SK-N-SH (cell line): ENCODE measurements at regions of chr1 and their contacts with region 1.

Region 1: GRCh38 chr1:23184212-23184934 is 15.7 kb upstream of the LUZP1 start:
- DNase-seq: peak; percentile 64
- H3K4me3 ChIP-seq: peak overlapping the region; percentile 15 to 51; a peak in 3 of 4 replicates
- H3K27ac ChIP-seq: no peak overlapping the region
- H3K4me1 ChIP-seq: peaks cover 0 to 7% of the 10 kb centered on the region in 2 experiments; a peak in 3 of 4 replicates
- H3K27me3 ChIP-seq: no peaks in the 10 kb centered on the region
- CTCF ChIP-seq: peak; percentile 90
- EP300 ChIP-seq: no peak
- RAD21 ChIP-seq: peak; percentile 89

Region 2: DNA sequence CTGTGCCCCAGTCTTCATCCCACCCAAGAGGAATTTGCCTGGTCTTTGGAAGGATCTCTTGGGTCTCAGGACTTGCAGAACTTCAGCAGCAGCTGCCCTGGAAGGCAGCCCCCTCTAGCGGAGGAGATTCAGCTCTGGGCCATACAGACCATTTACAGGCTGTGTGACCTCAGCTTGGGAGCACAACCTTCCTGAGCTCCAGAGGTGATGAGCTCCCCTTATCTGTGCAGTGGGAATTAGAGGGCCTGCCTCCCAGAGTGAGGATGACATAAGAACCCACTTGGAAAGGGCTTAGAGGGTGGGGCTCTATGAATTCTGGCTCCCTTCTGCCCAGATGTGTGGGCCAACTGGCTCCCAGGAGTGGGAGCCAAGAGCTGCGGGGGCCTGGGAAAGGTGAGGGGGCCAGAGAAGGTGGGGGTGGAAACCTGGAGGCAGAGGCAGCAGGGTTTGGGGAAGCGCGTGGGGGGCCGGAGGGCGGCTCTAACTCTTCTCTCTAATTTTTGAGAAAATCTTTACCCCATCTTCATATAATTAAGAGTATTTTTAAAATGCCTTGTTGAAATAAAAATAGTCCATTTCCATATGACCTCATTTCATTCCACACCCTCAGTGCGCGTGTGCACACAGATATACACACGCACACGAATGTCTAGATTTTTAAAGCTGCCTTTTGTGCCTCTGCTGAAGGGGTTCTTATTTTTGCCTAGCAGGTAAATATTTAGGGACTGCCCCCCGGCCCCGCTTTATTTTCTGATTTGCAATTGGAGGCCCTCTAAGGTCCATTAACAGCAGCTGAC is 452.3 kb before region 1 on chr1:
- CTCF ChIA-PET with region 1: no interaction called
- POLR2A ChIA-PET with region 1: no interaction called
- DNase-seq: no peak
- H3K4me3 ChIP-seq: no peak overlapping the region; a peak in 1 of 4 replicates
- H3K27ac ChIP-seq: no peak overlapping the region
- H3K4me1 ChIP-seq: peaks cover 0 to 4% of the 10 kb centered on the region in 2 experiments; a peak in 1 of 4 replicates
- H3K27me3 ChIP-seq: no peaks in the 10 kb centered on the region
- CTCF ChIP-seq: 0 out of 2 replicates have a peak, but pooled peaks have one; percentile 11
- EP300 ChIP-seq: no peak
- RAD21 ChIP-seq: no peak

Region 3: GRCh38 chr1:22995774-22996173 is 188.6 kb before region 1 on chr1:
- CTCF ChIA-PET with region 1: interaction called, 13 read pairs
- POLR2A ChIA-PET with region 1: no interaction called
- DNase-seq: no peak
- H3K4me3 ChIP-seq: no peak overlapping the region
- H3K27ac ChIP-seq: no peak overlapping the region
- H3K4me1 ChIP-seq: no peaks in the 10 kb centered on the region
- H3K27me3 ChIP-seq: no peaks in the 10 kb centered on the region
- CTCF ChIP-seq: no peak
- EP300 ChIP-seq: no peak
- RAD21 ChIP-seq: no peak

Region 4: DNA sequence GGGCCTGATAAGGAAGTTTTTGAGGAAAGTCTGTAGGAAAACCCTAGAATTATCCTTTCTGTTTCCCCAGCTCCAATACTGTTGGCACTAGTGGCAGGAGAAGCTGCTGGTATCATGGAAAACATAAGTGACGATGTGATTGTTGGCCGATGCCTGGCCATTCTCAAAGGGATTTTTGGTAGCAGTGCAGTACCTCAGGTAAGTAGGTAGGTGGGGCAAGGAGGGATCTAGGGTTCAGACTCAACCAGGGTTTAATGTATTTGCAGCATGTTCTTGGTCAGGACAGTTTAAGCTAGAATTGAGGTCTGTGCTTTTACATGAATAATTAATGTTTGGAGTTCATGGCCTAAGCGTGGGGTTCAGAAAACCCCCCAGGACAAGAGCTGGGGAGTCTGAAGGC is 103.0 kb before region 1 on chr1:
- CTCF ChIA-PET with region 1: interaction called, 25 read pairs
- POLR2A ChIA-PET with region 1: no interaction called
- DNase-seq: no peak
- H3K4me3 ChIP-seq: no peak overlapping the region
- H3K27ac ChIP-seq: no peak overlapping the region
- H3K4me1 ChIP-seq: no peaks in the 10 kb centered on the region
- H3K27me3 ChIP-seq: no peaks in the 10 kb centered on the region
- CTCF ChIP-seq: peak; percentile 28; the same call in 1 of the 2 replicates
- EP300 ChIP-seq: no peak
- RAD21 ChIP-seq: no peak

Region 5: DNA sequence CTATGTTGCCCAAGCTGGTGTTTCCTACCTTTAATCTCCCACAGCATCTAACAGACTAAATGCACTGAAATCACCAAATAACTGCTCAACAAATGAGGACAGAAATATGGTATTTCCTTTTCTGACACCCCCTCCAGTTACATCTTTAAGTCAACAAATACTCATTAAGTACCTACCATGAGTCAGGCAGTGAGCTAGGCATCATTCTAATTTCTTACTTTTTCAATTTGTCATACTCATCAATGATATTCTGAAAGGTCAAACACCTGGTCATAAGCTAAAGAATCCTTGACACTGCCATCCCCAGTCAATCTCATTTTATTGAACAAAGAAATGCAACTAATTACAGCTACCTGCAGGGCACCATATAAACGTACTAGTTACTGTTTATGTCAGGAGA is 52.3 kb before region 1 on chr1:
- CTCF ChIA-PET with region 1: interaction called, 10 read pairs
- POLR2A ChIA-PET with region 1: no interaction called
- DNase-seq: no peak
- H3K4me3 ChIP-seq: no peak overlapping the region
- H3K27ac ChIP-seq: no peak overlapping the region
- H3K4me1 ChIP-seq: peaks cover 0 to 12% of the 10 kb centered on the region in 2 experiments; a peak in 1 of 4 replicates
- H3K27me3 ChIP-seq: no peaks in the 10 kb centered on the region
- CTCF ChIP-seq: no peak
- EP300 ChIP-seq: no peak
- RAD21 ChIP-seq: no peak

Region 6: GRCh38 chr1:23168457-23169194 is 15.7 kb before region 1 on chr1 and contains the start of gene LUZP1:
- CTCF ChIA-PET with region 1: interaction called, 96 read pairs
- POLR2A ChIA-PET with region 1: no interaction called
- DNase-seq: peak; percentile 93
- H3K4me3 ChIP-seq: peak within 1 kb of the TSS; percentile 71 to 96
- H3K27ac ChIP-seq: peak within 1 kb of the TSS; percentile 80 to 94
- H3K4me1 ChIP-seq: peaks cover 10 to 16% of the 10 kb centered on the region in 2 experiments
- H3K27me3 ChIP-seq: no peaks in the 10 kb centered on the region
- CTCF ChIP-seq: no peak
- EP300 ChIP-seq: no peak
- RAD21 ChIP-seq: no peak
- polyA plus RNA-seq, gene LUZP1: 8.9 and 12.5 TPM in 2 replicates

Region 7: DNA sequence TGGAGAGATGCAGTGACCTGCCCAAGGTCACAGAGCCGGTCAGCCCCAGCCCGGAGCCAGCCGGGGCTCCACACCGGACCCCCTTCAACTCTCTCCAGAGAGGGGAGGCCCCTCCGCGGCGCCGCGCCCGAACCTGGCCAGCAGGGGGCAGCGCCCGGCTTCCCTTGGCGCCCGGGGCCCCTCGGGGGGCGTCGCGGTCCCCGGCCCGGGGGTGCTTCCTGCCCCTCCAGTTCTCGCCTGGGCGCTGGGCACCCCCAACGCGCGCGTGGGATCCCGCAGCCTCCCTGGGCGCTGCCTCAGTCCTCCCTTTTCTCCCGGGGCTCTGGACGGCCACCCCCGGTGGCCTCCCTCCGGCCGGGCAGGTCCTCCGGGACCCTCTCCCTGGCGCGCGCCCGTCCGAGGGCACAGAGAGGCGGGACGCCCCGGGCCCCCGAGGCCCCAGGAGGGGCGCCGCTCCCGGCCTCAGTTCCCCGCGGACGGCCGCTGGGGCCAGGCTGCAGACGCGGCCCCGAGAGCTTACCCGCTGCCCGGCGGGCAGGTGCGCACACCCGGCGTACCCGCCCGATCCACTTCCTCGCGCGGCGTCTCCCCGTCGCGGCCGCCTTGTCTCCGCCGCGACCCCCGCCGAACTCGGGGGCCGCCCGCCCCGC is 32.5 kb after region 1 on chr1:
- CTCF ChIA-PET with region 1: interaction called, 28 read pairs
- POLR2A ChIA-PET with region 1: no interaction called
- DNase-seq: peak; percentile 89
- H3K4me3 ChIP-seq: peak overlapping the region; percentile 52 to 53
- H3K27ac ChIP-seq: no peak overlapping the region
- H3K4me1 ChIP-seq: no peaks in the 10 kb centered on the region
- H3K27me3 ChIP-seq: peaks cover 14% of the 10 kb centered on the region; the same call in 1 of the 2 replicates
- CTCF ChIP-seq: peak; percentile 78
- EP300 ChIP-seq: no peak
- RAD21 ChIP-seq: peak; percentile 52